Posterior vena cava (tissue), 2 donors: ENCODE measurements at regions of chr19 and their contacts with region 1.

Region 1: GRCh38 chr19:42487032-42487797 is 41.1 kb downstream of the CEACAM1 start:
- DNase-seq: no peak

Region 2: GRCh38 chr19:42508892-42509444 is 21.8 kb after region 1 on chr19:
- intact Hi-C with region 1: loop called in 1 of 2 experiments (anchors 1 kb)
- DNase-seq: no peak